Gastrocnemius medialis (tissue), 4 donors: ENCODE measurements at regions of chr19 and their contacts with region 1.

Region 1: DNA sequence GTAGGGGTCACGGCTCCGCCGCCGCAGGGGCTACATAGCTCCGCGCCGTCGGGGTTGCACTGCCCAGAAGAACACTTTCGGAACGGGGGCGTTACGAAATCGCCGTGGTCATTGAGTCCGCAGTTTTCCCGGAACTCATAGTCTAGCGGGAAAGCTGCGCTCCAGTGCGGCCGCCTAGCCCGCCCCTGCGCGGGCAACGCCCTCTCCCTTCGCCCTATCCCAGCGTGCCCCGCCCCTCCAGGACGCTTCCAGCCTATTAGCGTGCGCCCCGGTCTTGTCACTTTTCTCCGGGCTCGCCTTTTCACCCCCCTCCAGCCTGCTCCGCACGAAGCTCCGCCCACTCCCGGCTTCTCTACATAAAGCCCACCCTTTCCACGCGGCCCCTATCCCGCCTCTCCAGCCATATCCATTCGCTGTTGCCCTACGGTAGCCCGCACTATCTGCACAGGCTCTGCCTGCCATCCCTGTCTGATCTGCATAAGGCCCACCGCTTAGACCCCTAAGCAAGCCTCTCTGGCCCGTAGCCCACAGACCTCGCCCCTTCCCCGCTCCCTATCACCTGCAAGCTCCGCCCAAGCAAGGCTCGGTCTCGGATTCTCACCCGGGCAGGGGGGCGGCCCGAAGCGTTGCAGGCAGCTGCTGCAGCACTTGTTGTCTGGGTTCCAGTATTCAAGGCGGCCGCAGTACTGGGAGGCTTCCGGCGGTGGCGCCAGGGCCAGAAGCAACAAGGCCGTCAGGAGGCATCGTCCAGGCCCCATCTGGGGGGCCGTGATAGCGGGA is 1.6 kb downstream of the IGFLR1 start:
- DNase-seq: peak; percentile 96 to 98
- ATAC-seq: peak; percentile 74
- H3K4me3 ChIP-seq: peak overlapping the region; percentile 52 to 88 (median 78)
- H3K27ac ChIP-seq: peak overlapping the region; percentile 77 to 86 (median 82)
- H3K4me1 ChIP-seq: peaks cover 20 to 26% of the 10 kb centered on the region in 2 donors
- H3K27me3 ChIP-seq: no peaks in the 10 kb centered on the region
- CTCF ChIP-seq: peak in 3 of 5 experiments; percentile 9 to 34 (median 24)
- POLR2A ChIP-seq: peak in 1 of 2 donors; percentile 56

Region 2: GRCh38 chr19:35495107-35496064 is 245.2 kb before region 1 on chr19:
- in situ Hi-C with region 1: no loop called
- intact Hi-C with region 1: no loop called
- DNase-seq: peak; percentile 11 to 24
- ATAC-seq: peak; percentile 73 to 82
- H3K4me3 ChIP-seq: peak overlapping the region in 1 of 4 donors; percentile 7
- H3K27ac ChIP-seq: no peak overlapping the region
- H3K4me1 ChIP-seq: peaks cover 0 to 3% of the 10 kb centered on the region in 2 donors
- H3K27me3 ChIP-seq: peaks cover 0 to 5% (median 0%) of the 10 kb centered on the region in 3 donors
- CTCF ChIP-seq: peak; percentile 75 to 95 (median 83)
- POLR2A ChIP-seq: no peak

Region 3: GRCh38 chr19:35702223-35703012 is 38.2 kb before region 1 on chr19:
- in situ Hi-C with region 1: no loop called
- intact Hi-C with region 1: loop called (anchors 2 kb)
- DNase-seq: peak; percentile 94 to 96
- ATAC-seq: peak; percentile 100
- H3K4me3 ChIP-seq: peak overlapping the region; percentile 76 to 93 (median 84)
- H3K27ac ChIP-seq: peak overlapping the region; percentile 71 to 82 (median 79)
- H3K4me1 ChIP-seq: no peaks in the 10 kb centered on the region
- H3K27me3 ChIP-seq: no peaks in the 10 kb centered on the region
- CTCF ChIP-seq: no peak
- POLR2A ChIP-seq: peak; percentile 34 to 45